ENCODE measurements at regions of chr19 and their contacts with region 1.

Region 1: DNA sequence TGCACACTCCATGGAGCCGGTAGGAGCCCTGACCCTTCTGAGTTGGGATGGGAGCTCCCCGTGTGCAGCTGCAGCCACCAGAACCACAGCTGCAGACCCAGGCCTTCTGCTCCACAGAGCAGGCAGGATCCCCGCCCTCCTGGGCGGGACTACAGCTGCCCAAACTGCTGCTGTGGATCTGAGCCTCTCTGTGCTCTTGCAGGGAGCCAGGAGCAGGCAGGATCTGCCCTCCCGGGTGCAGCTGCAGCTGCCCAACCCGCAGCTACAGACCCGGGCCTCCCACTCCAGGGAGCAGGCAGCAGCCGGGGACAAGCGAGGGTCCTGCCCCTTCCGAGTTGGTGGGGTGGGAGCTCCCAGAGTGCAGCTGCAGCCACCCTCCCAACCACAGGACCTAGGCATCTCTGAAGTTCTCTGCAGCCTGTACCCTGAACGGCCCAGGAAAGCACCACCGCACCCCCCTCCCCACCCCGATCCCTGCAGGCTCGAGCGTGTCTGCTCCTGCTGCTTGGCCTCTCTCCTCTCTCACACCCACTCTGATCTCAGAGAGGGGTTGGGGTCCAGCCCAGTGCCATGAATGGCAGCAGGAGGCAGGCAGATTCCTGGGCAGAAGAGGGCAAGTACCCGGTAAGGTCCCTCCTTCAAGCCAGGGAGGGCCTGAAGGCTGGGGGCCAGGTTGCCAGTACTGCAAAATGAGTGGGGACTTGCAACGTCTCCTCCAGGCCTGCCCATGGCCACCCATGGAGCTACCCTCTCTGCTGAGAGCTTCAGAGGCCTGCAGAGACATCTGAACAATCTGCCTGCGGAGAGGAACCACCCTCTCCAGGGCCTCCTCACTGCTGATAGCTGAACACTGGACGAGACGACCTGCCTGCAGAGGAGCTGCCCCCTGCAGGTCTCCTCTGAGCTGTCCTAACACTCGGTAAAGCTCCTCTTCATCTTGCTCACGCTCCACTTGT is 16.4 kb upstream of the EMP3 start:
- DNase-seq: no peak
- ATAC-seq: peak; percentile 16 to 55 (median 42)
- H3K4me3 ChIP-seq: no peak overlapping the region
- H3K27ac ChIP-seq: peak overlapping the region in 6 of 10 donors; percentile 45 to 81 (median 64)
- H3K4me1 ChIP-seq: peaks cover 7 to 31% (median 18%) of the 10 kb centered on the region in 9 donors
- H3K27me3 ChIP-seq: no peaks in the 10 kb centered on the region
- CTCF ChIP-seq: peak in 5 of 9 donors; percentile 12 to 34 (median 28)

Region 2: DNA sequence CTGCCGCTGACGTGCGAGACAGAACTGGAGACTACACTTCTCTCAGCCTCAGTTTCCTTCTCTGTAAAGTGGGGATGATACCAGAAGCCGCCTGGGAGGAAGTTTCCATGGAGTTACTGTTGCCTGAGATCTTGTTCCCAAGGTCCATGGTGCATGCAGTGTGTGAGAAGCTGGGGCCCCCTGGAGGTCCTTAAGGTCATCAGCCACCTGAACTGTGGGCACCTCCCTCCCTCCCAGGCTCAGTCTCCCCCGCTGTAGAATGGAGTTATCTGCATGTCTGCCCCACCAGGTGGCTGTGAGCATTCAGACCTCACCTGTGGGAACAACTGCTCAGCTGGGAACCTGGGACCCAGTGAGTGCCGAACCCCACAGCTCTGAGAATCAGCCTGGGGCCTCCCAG is 484.5 kb before region 1 on chr19:
- intact Hi-C with region 1: no loop called
- DNase-seq: no peak
- ATAC-seq: no peak
- H3K4me3 ChIP-seq: no peak overlapping the region
- H3K27ac ChIP-seq: no peak overlapping the region
- H3K4me1 ChIP-seq: no peaks in the 10 kb centered on the region
- H3K27me3 ChIP-seq: peaks cover 0 to 49% (median 27%) of the 10 kb centered on the region in 7 donors
- CTCF ChIP-seq: no peak

Region 3: GRCh38 chr19:48271531-48272151 is 37.3 kb before region 1 on chr19:
- intact Hi-C with region 1: loop called in 1 of 10 experiments (anchors 5 kb)
- DNase-seq: peak; percentile 40 to 45
- ATAC-seq: peak; percentile 59 to 80 (median 75)
- H3K4me3 ChIP-seq: peak overlapping the region; percentile 34 to 71 (median 58)
- H3K27ac ChIP-seq: peak overlapping the region in 9 of 10 donors; percentile 24 to 85 (median 73)
- H3K4me1 ChIP-seq: peaks cover 0 to 21% (median 8%) of the 10 kb centered on the region in 9 donors
- H3K27me3 ChIP-seq: peaks cover 0 to 3% (median 0%) of the 10 kb centered on the region in 7 donors
- CTCF ChIP-seq: no peak

Region 4: GRCh38 chr19:48290771-48291488 is 18.0 kb before region 1 on chr19:
- intact Hi-C with region 1: loop called in 1 of 10 experiments (anchors 2 kb)
- DNase-seq: peak; percentile 77 to 83
- ATAC-seq: peak; percentile 75 to 95 (median 92)
- H3K4me3 ChIP-seq: peak overlapping the region in 9 of 10 donors; percentile 30 to 58 (median 54)
- H3K27ac ChIP-seq: peak overlapping the region in 4 of 10 donors; percentile 16 to 51 (median 30)
- H3K4me1 ChIP-seq: peaks cover 0 to 17% (median 13%) of the 10 kb centered on the region in 9 donors
- H3K27me3 ChIP-seq: peaks cover 0 to 7% (median 3%) of the 10 kb centered on the region in 7 donors
- CTCF ChIP-seq: peak in 8 of 9 donors; percentile 96 to 99 (median 98)

Region 5: GRCh38 chr19:48492925-48493717 is 184.2 kb after region 1 on chr19:
- intact Hi-C with region 1: loop called in 1 of 10 experiments (anchors 10 kb)
- DNase-seq: peak; percentile 95
- ATAC-seq: peak; percentile 86 to 94 (median 89)
- H3K4me3 ChIP-seq: peak overlapping the region in 9 of 10 donors; percentile 25 to 62 (median 57)
- H3K27ac ChIP-seq: peak overlapping the region in 9 of 10 donors; percentile 25 to 83 (median 67)
- H3K4me1 ChIP-seq: peaks cover 2 to 52% (median 30%) of the 10 kb centered on the region in 9 donors
- H3K27me3 ChIP-seq: peaks cover 0 to 62% (median 18%) of the 10 kb centered on the region in 7 donors
- CTCF ChIP-seq: no peak